Left lung (tissue), 14 donors: ENCODE measurements at regions of chr22 and their contacts with region 1.

Region 1: GRCh38 chr22:39123751-39124601 is 26.9 kb downstream of the APOBEC3H start:
- DNase-seq: peak in 2 of 4 donors; percentile 32 to 68
- ATAC-seq: peak; percentile 23
- H3K4me3 ChIP-seq: no peak overlapping the region
- H3K27ac ChIP-seq: no peak overlapping the region
- H3K4me1 ChIP-seq: no peaks in the 10 kb centered on the region
- H3K27me3 ChIP-seq: no peaks in the 10 kb centered on the region
- CTCF ChIP-seq: no peak

Region 2: DNA sequence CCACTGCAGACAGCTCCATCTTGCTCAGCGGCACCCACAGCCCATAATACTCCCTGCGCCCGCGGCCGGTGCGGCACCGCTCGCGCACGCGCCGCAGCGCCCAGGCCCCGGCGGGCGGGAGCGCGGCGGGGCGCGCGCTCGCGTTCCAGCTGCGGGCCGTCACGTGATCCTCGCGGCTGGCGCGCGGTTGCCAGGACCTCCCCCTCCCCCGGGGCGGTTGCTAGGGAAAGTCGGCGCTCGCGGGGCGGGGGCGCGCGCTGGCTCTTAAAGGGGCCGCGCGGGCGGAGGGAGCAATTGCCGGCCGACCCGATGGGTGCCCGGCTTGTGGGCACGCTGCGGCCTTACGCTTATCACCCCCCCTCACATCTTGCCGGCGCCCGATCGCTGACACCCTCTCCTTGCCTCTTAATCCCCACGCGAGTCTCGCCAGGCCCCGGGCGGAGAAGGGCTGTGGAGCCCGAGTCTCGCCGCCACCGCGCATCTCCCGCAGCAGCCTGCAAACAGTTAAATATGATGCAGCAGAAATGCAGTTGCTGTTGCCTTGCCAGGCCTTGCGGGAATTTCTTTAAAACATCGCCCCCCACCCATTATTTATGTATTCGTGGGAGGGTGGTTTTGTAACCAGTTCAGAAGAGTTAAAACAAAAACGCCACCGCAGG is 251.7 kb before region 1 on chr22 and contains the start of gene CBX6:
- intact Hi-C with region 1: loop called in 1 of 2 experiments (anchors 10 kb)
- DNase-seq: peak; percentile 96 to 98 (median 97)
- ATAC-seq: peak; percentile 85
- H3K4me3 ChIP-seq: peak within 1 kb of the TSS; percentile 69 to 88
- H3K27ac ChIP-seq: peak within 1 kb of the TSS; percentile 89 to 96
- H3K4me1 ChIP-seq: peaks cover 12 to 36% of the 10 kb centered on the region in 2 donors
- H3K27me3 ChIP-seq: no peaks in the 10 kb centered on the region
- CTCF ChIP-seq: no peak
- polyA plus RNA-seq, gene CBX6: 22.0 to 46.3 (median 40.6) TPM

Region 3: GRCh38 chr22:39003165-39003638 is 120.8 kb before region 1 on chr22:
- intact Hi-C with region 1: loop called in 1 of 2 experiments (anchors 10 kb)
- DNase-seq: peak in 3 of 4 donors; percentile 70 to 87 (median 80)
- ATAC-seq: peak; percentile 99
- H3K4me3 ChIP-seq: no peak overlapping the region
- H3K27ac ChIP-seq: no peak overlapping the region
- H3K4me1 ChIP-seq: peaks cover 0 to 15% of the 10 kb centered on the region in 2 donors
- H3K27me3 ChIP-seq: peaks cover 0 to 13% of the 10 kb centered on the region in 2 donors
- CTCF ChIP-seq: peak; percentile 61 to 78

Region 4: DNA sequence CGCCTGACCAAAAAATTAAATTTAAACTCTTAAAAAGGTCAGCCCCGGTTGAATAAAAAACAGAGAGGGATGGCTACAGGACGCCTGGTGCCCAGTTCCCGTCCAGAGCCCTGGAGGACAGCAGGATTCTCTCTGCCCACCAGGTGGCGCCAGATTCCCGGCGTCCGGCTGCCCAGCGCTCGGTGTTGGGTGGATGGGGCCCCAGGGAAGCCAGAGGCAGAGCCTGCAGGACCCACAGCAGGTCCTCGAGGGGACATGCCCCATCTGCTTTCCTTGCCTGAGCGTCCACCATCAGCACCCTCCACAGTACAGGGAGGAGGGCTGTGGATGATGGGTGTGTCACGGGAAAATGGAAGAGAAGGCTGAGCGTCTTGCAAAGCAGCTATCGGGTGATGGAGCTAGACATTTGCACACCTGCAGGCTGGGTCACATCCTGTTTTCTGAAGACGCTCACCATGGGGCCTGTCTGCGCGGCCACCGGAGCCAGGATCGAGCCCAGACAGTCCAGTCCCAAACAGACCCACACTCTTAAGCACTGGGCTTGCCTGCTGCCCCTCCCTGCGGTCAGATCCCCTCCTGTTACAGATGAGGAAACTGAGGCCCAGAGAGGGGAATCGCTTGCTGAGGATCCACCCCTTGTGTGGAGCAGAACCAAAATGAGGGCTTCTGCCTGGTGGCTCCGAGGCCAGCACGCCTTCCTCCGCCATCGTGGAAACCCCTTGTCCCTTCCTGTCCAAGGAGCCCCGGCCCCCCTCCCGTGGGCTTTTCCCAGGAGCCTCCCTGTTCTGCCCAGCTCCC is 47.0 kb after region 1 on chr22:
- intact Hi-C with region 1: no loop called
- DNase-seq: peak; percentile 80 to 97 (median 85)
- ATAC-seq: peak; percentile 88
- H3K4me3 ChIP-seq: no peak overlapping the region
- H3K27ac ChIP-seq: no peak overlapping the region
- H3K4me1 ChIP-seq: peaks cover 31 to 50% of the 10 kb centered on the region in 2 donors
- H3K27me3 ChIP-seq: no peaks in the 10 kb centered on the region
- CTCF ChIP-seq: peak; percentile 97 to 98